Testis (tissue), 5 donors: ENCODE measurements at regions of chr7 and their contacts with region 1.

Region 1: GRCh38 chr7:100407285-100408180 is 21.0 kb downstream of the ZCWPW1 start:
- DNase-seq: peak; percentile 46
- H3K4me3 ChIP-seq: no peak overlapping the region
- H3K27ac ChIP-seq: no peak overlapping the region
- H3K4me1 ChIP-seq: peaks cover 4% of the 10 kb centered on the region
- H3K27me3 ChIP-seq: no peaks in the 10 kb centered on the region
- CTCF ChIP-seq: peak; percentile 54 to 76 (median 74)
- POLR2A ChIP-seq: no peak

Region 2: GRCh38 chr7:100342765-100343164 is 64.8 kb before region 1 on chr7:
- intact Hi-C with region 1: loop called (anchors 10 kb)
- DNase-seq: no peak
- H3K4me3 ChIP-seq: no peak overlapping the region
- H3K27ac ChIP-seq: peak overlapping the region in 1 of 2 donors; percentile 90
- H3K4me1 ChIP-seq: peaks cover 42% of the 10 kb centered on the region
- H3K27me3 ChIP-seq: no peaks in the 10 kb centered on the region
- CTCF ChIP-seq: no peak
- POLR2A ChIP-seq: no peak